Cardiac septum (tissue), 1 donor: ENCODE measurements at regions of chr10 and their contacts with region 1.

Region 1: GRCh38 chr10:84924131-84924530 is 595.7 kb downstream of the CCSER2 start:
- DNase-seq: no peak

Region 2: DNA sequence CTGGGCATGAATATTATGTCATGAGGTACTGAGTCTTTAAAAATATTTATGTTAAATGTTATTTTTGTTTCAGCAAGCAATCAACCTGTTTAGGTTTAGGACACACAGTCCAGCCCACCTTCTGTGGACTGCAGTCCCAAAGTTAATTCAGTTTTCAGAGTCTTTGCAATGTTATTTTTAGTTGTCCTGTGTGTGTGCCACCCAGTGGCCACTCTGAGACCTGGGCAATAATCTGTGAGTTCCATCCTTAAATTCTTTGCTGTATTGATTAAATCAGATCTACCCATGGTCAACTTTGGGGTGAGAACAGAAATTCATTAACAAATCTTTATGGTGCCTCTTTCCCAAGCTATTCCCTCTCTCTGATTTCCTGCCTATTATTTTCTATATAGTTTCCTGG is 180.6 kb before region 1 on chr10:
- intact Hi-C with region 1: no loop called
- DNase-seq: no peak

Region 3: DNA sequence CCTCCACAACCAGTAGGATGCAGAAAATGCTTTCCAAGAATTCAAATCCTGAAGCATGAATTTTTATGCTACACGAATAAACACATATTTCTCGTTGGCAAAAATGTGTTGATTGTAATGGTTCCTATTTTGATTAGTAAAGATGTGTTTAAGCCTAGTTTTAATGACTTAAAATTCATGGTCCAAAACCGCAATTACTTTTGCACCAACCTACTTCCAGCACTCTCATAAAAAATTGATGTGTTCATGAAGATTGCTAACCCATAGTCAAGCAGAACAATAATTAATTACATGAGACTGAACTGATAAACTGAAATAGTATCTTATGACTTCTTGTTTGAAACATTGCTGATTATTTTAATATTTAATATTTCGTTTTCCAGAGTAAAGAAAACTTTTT is 233.1 kb after region 1 on chr10:
- intact Hi-C with region 1: no loop called
- DNase-seq: no peak

Region 4: DNA sequence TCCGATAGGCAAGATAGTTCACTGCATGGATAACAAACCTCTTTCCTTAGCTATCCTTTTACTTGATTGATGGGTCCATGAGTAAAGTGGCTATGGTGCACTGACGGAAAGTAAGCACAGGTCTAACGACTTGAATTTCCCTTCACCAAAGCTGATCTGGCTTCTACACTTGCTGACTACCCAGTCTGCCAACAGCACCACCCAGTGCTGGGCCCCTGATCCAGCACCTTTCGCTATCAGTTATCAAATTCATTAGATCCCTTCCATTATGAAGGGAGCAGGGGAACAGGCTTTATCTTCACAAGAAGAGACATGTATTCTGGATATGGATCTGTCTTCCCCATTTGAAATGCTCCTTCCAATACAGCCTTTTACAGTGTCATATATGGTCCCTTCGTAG is 586.6 kb after region 1 on chr10:
- intact Hi-C with region 1: loop called (anchors 10 kb)
- DNase-seq: no peak